Activated CD8-positive, alpha-beta memory T cell treated with anti-CD3 and anti-CD28 coated beads, Interleukin-2, amount 10 ng/mL, durations not matched to agents 7 days and 5 days (primary cell): ENCODE measurements at regions of chr1 and their contacts with region 1.

Region 1: DNA sequence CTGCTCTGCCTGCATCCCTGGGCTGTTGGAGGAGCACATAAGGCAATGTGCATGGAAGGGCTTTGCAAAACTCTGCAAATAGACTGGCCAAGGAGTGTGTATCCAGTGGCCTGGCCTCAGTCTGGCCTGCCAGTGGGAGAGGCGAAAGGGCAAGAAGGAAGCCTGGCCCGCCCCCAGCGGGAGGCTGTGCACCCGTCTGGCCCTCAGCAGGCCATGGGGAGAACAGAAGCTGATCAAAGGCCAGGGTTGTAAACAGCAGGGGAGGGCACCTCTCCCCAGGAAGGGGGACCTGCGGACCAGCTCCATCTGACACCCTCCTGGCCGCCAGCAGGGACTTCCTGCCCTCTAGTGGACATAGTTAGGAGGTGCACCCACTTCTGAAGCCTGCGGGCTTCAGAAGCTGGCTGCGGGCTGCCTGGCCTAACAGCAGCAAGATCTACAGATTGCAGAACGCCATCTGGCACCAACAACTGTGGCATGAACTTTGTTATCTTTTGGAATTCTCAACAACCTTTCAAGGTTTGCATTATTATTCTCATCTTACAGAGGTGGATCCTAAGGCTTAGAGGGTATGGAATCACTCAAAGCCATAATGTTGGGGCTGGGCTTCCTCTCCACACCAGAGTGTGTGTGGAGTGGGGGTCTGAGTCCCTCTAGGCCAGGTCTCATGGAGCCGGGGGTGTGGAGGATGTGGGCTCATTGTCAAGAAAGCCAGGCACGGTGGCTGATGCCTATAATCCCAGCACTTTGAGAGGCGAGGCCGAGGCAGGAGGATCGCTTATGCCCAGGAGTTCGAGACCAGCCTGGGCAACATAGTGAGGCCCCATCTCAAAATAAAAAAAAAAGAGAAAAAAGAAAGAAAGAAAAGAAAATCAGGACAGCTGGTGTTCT is 18.9 kb upstream of the CDK18 start:
- DNase-seq: peak; percentile 79
- ATAC-seq: peak; percentile 59
- H3K4me3 Mint-ChIP-seq: no peak overlapping the region
- H3K27ac Mint-ChIP-seq: no peak overlapping the region
- H3K4me1 Mint-ChIP-seq: peaks cover 36% of the 10 kb centered on the region
- H3K27me3 Mint-ChIP-seq: peaks cover 24% of the 10 kb centered on the region

Region 2: GRCh38 chr1:205344066-205344928 is 141.3 kb before region 1 on chr1:
- CTCF ChIA-PET with region 1: interaction called, 16 read pairs
- DNase-seq: no peak
- ATAC-seq: peak; percentile 40
- H3K4me3 Mint-ChIP-seq: no peak overlapping the region
- H3K27ac Mint-ChIP-seq: no peak overlapping the region
- H3K4me1 Mint-ChIP-seq: peaks cover 19% of the 10 kb centered on the region
- H3K27me3 Mint-ChIP-seq: peaks cover 74% of the 10 kb centered on the region

Region 3: DNA sequence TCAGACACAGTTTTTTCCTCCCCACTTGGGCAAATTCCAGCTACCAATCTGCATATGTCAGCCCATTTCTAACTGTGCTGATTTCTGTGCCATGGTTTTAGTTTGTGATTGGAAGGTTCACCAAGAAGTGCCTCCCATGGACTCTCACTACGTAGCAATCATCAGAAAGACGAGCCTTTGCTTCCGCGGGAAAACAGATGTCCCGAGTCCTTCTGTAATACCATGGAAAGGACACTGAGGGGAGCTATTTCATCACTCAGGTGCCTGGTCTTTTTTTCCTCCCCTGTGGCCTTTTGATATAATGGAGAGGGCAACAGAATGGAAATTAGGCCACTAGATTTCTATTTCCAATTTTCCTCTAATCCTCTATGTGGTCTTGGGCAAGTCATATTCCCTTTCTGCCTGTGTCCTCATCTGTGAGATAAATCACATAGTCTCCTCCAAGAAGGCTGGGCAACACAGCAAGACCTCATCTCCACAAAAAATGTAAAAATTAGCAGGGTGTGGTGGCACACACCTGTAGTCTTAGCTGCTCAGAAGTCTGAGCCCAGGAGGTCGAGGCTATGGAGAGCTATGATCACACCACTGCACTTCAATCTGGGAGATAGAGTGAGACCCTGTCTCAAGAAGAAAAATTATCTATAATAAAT is 88.5 kb before region 1 on chr1:
- CTCF ChIA-PET with region 1: interaction called, 138 read pairs
- DNase-seq: no peak
- ATAC-seq: no peak
- H3K4me3 Mint-ChIP-seq: no peak overlapping the region
- H3K27ac Mint-ChIP-seq: no peak overlapping the region
- H3K4me1 Mint-ChIP-seq: no peaks in the 10 kb centered on the region
- H3K27me3 Mint-ChIP-seq: peaks cover 31% of the 10 kb centered on the region

Region 4: GRCh38 chr1:205430696-205431305 is 54.8 kb before region 1 on chr1:
- CTCF ChIA-PET with region 1: interaction called, 58 read pairs
- DNase-seq: peak; percentile 57
- ATAC-seq: peak; percentile 80
- H3K4me3 Mint-ChIP-seq: peak overlapping the region; percentile 70
- H3K27ac Mint-ChIP-seq: peak overlapping the region; percentile 38
- H3K4me1 Mint-ChIP-seq: peaks cover 9% of the 10 kb centered on the region
- H3K27me3 Mint-ChIP-seq: peaks cover 24% of the 10 kb centered on the region

Region 5: GRCh38 chr1:205473475-205473874 is 12.1 kb before region 1 on chr1:
- CTCF ChIA-PET with region 1: interaction called, 22 read pairs
- DNase-seq: no peak
- ATAC-seq: no peak
- H3K4me3 Mint-ChIP-seq: no peak overlapping the region
- H3K27ac Mint-ChIP-seq: no peak overlapping the region
- H3K4me1 Mint-ChIP-seq: no peaks in the 10 kb centered on the region
- H3K27me3 Mint-ChIP-seq: peaks cover 34% of the 10 kb centered on the region

Region 6: GRCh38 chr1:205523891-205524793 is 38.6 kb after region 1 on chr1:
- CTCF ChIA-PET with region 1: interaction called, 252 read pairs
- DNase-seq: peak; percentile 79
- ATAC-seq: peak; percentile 67
- H3K4me3 Mint-ChIP-seq: no peak overlapping the region
- H3K27ac Mint-ChIP-seq: no peak overlapping the region
- H3K4me1 Mint-ChIP-seq: no peaks in the 10 kb centered on the region
- H3K27me3 Mint-ChIP-seq: peaks cover 3% of the 10 kb centered on the region